Sciatic nerve (tissue), 2 donors: ENCODE measurements at regions of chr1 and their contacts with region 1.

Region 1: GRCh38 chr1:72662918-72663317 is 380.6 kb upstream of the NEGR1 start:
- DNase-seq: no peak
- ATAC-seq: no peak

Region 2: DNA sequence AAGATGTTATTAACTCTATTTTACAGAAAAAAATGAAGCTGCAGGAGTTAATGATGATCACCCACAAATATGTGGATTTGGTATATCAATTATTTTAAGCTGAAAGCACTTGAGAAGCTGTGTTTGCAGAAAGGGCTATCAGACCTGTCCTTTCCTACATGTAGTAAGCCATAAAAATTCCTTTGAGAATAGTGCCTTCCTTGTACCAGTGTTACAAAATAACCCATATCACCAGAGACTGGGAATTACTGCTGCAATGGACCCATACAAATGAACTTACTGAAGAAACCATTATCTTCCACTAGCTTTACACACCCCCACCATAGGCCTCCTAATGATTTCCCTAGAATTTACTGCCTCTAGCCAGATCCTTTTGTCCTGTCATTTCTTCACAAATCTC is 1482.9 kb before region 1 on chr1:
- intact Hi-C with region 1: no loop called
- DNase-seq: no peak
- ATAC-seq: no peak

Region 3: DNA sequence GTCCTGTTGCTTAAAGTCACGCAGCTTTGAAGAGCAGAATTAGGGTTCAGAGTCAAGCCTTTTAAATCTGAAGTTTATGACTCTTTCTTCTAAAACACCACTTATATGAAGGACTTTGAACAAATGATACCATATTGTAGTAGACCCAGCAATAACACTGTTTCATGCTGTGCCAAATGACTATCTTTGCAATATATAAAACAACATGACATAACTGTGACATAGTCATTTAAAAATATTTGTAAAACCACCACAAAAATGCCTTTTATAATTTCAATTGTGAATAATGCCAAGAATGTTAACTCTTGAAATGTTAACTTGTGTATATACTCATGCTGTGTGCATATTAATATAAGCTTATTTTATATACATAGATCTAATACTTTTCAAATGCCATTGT is 71.5 kb after region 1 on chr1:
- intact Hi-C with region 1: loop called (anchors 2 kb)
- DNase-seq: no peak
- ATAC-seq: no peak